ENCODE measurements at regions of chr22 and their contacts with region 1.

Region 1: DNA sequence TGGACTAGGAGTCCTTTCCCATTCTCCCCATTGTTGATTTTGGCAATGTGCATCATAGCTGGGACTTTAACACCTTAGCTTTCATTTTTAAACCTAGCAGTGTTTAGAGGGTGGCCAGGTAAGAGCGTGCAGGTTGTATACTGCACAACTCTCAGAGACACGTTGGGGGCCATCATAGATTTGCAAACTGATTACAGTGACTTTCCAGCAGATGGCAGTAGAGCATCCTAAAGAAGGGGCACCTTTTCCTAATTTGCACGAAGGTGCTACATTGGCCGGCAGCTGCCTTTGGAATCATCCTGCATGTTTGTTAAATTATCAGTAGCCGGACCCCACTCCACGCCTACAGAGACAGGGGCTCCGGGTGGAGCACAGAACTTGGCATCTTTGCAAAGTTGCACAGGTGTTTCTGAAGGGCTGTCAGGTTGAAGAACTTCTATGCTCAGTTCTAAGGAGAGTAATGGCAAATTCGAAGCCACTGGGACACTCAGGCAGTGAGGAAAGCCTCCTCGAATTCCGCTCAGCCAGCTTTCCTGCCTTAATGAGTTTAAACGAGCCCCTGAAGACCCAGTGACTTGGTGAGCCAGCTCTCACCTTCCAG is 7.7 kb downstream of the LHFPL7 start:
- ATAC-seq: peak in 4 of 8 experiments; percentile 38 to 82 (median 64)
- H3K4me3 ChIP-seq: no peak overlapping the region
- H3K27ac ChIP-seq: no peak overlapping the region
- H3K4me1 ChIP-seq: peaks cover 0 to 4% of the 10 kb centered on the region in 2 donors

Region 2: GRCh38 chr22:25007444-25008106 is 68.7 kb after region 1 on chr22:
- in situ Hi-C with region 1: no loop called
- ATAC-seq: peak; percentile 43 to 91 (median 86)
- H3K4me3 ChIP-seq: no peak overlapping the region
- H3K27ac ChIP-seq: no peak overlapping the region
- H3K4me1 ChIP-seq: peaks cover 4 to 8% of the 10 kb centered on the region in 2 donors

Region 3: GRCh38 chr22:25048659-25049647 is 110.1 kb after region 1 on chr22:
- in situ Hi-C with region 1: loop called in 5 of 9 experiments (anchors 10 to 25 kb)
- ATAC-seq: peak; percentile 39 to 85 (median 64)
- H3K4me3 ChIP-seq: no peak overlapping the region
- H3K27ac ChIP-seq: no peak overlapping the region
- H3K4me1 ChIP-seq: no peaks in the 10 kb centered on the region

Region 4: GRCh38 chr22:25057013-25057881 is 118.4 kb after region 1 on chr22:
- in situ Hi-C with region 1: loop called in 1 of 9 experiments (anchors 25 kb)
- ATAC-seq: peak; percentile 76 to 99 (median 90)
- H3K4me3 ChIP-seq: no peak overlapping the region
- H3K27ac ChIP-seq: no peak overlapping the region
- H3K4me1 ChIP-seq: no peaks in the 10 kb centered on the region

Region 5: DNA sequence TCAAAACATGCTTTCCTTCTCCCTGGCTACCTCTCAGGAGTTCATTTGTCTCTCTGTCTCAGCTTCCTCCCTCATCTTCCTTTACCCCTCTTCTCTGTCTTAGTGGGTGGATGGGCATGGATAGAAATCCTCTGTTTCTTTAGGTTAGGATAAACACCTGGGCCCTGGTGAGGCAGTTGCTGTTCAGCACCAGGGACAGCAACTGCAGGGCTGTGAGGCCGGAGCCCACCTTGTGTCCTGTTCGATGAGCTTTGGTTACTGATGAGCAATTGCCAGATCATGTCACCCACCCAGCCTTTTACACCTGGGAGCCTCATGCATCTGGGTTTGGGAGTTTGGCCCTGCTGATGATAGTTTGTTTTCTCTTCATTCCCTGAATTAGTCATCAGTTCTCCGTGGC is 254.7 kb after region 1 on chr22:
- in situ Hi-C with region 1: loop called in 1 of 9 experiments (anchors 25 kb)
- ATAC-seq: no peak
- H3K4me3 ChIP-seq: no peak overlapping the region
- H3K27ac ChIP-seq: no peak overlapping the region
- H3K4me1 ChIP-seq: peaks cover 2 to 6% of the 10 kb centered on the region in 2 donors

Measured in motor neuron (in vitro differentiated cells).